Right ventricle myocardium inferior (tissue), 1 donor: ENCODE measurements at regions of chr4 and their contacts with region 1.

Region 1: DNA sequence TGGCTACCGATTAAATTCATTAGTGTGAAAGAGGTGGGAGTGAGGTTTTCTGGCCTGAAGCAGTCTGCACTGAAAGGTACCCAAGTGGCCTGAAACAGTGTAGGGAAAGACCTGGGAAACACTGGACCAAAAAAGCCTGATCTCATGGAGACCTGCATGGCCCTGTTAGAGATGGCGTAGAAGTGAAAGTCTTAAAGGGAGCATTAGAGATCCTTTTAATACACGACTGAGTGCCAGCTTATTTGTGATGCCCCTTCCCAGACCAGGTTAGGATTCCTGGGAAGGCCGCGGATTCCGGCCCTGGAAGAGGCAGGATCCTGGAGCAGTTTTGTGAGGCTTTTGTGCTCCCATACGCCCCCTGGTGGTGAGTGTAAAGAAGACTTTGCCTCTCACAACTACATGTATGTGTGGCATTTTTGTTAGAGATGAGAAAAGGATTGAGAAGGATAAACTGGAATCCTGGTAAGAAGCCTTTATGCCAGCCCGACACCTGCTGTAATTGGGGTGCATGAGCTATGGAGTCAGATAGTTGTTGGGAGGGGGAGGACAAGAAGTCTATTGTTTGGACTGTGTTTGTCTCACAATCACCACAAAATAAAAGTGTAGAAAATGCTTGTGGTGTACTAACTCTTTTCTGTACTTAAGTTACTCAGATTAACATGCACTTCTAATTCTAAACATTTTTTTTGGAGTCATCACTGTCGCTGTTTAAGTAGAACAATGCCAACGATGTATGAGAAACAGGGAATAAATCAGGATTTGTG is 54.0 kb downstream of the JADE1 start:
- DNase-seq: no peak
- ATAC-seq: peak; percentile 69

Region 2: GRCh38 chr4:128191115-128191781 is 672.2 kb before region 1 on chr4:
- intact Hi-C with region 1: loop called (anchors 2 kb)
- DNase-seq: peak; percentile 67
- ATAC-seq: peak; percentile 71

Region 3: DNA sequence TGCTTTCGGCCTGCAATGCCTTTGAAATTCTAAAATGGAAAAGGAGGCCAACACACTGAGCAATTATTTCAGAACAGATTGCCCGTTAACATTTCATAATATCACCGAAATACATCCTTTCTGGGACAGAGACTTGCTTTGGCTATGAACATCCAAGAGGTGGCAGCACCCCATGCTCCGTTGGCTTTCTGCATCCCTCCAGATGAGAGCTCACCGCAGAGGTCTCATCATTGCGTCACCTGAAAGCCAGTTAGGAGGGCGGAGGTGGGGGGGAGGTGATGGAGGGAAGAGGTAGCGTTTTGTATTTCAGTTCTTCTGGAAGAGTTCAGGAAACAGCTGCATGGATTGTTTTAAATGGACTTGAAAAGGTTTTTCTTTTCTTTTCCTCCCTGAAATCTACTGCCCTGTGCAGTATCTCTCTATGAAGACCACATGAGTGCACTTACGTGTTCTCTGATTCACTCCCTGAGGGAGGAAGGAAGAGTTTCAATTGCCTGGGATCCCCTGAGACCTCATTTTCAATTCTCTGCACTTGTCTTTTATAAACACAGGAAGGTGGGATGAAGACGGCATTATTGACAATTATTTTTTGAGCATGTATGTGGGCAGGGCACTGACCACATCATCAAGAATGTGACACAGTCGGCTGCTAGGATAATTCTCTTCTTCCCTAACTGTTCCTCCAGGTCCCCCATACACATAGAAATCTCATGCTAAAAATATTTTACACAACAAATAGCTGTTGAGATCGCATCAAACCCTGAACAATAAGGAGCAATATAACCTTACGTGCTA is 409.0 kb before region 1 on chr4:
- intact Hi-C with region 1: loop called (anchors 2 kb)
- DNase-seq: peak; percentile 78
- ATAC-seq: peak; percentile 93

Region 4: GRCh38 chr4:128565565-128566186 is 297.8 kb before region 1 on chr4:
- intact Hi-C with region 1: loop called (anchors 5 kb)
- DNase-seq: no peak
- ATAC-seq: peak; percentile 72

Region 5: GRCh38 chr4:128782076-128782715 is 81.3 kb before region 1 on chr4:
- intact Hi-C with region 1: loop called (anchors 1 kb)
- DNase-seq: no peak
- ATAC-seq: peak; percentile 73

Region 6: GRCh38 chr4:128924951-128925350 is 61.5 kb after region 1 on chr4:
- intact Hi-C with region 1: no loop called
- DNase-seq: no peak
- ATAC-seq: no peak